Ascending aorta (tissue), 2 donors: ENCODE measurements at regions of chr9 and their contacts with region 1.

Region 1: GRCh38 chr9:35814841-35815543 is at the start of gene HINT2:
- DNase-seq: peak; percentile 97 to 99
- H3K4me3 ChIP-seq: peak within 1 kb of the TSS; percentile 89 to 90
- H3K27ac ChIP-seq: peak within 1 kb of the TSS; percentile 92 to 96
- H3K4me1 ChIP-seq: peaks cover 8 to 27% of the 10 kb centered on the region in 2 donors
- H3K27me3 ChIP-seq: no peaks in the 10 kb centered on the region
- CTCF ChIP-seq: no peak
- total RNA-seq, gene HINT2: 21.6 TPM

Region 2: GRCh38 chr9:35732122-35732799 is 82.7 kb before region 1 on chr9 and contains the starts of genes CREB3 and TLN1:
- intact Hi-C with region 1: loop called (anchors 1 kb)
- DNase-seq: peak; percentile 98 to 100
- H3K4me3 ChIP-seq: peak within 1 kb of the TSS; percentile 74 to 81
- H3K27ac ChIP-seq: peak within 1 kb of the TSS; percentile 98 to 99
- H3K4me1 ChIP-seq: peaks cover 18 to 28% of the 10 kb centered on the region in 2 donors
- H3K27me3 ChIP-seq: no peaks in the 10 kb centered on the region
- CTCF ChIP-seq: no peak
- total RNA-seq, gene CREB3: 48.3 TPM
- total RNA-seq, gene TLN1: 735 TPM

Region 3: DNA sequence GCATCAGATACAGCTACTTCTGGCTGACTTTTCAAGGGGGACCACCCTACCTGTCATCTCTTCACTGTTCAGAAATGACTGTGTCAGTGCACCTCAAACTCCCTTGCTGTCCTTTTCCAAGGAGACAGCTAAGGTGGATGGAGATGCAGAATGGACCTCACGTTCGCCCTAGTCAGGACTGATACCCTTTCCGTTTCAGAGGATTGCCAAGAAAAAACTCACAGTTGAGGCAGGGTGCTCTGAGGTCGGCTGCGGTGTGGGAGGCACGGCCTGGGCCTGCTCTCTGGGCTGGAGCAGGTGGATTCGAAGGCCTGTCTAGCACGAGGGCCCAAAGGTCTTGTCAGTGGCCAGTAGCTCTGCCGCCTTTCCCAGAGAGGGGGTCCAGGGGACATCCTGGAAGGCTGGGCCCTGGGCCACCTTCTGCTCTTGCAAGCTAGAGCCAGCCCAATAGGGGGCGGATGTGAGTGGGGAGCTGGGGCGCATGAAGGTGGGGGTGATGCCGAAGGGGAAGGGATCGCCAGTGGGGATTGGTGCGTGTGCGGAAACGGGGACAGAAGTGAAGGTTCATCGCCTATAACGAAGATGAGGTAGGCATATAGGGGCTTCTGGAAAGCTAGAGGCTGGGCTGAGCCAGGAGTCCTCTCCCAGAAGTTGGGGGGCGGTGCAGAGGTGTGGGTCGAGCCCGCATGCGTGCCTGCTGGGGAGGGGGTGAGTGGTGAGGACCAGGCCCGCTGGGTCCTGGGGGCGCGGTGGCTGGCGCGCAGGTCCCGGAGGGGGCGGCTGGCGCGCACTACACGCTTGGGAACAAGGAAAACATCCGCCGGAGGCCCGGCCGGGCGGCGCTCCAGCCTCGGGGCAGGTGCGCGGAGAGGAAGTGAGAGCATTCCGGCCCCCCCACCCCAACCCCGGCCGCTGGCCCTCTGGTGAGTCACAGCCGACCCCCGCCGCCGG is 58.4 kb before region 1 on chr9:
- intact Hi-C with region 1: loop called (anchors 2 kb)
- DNase-seq: peak; percentile 47 to 86
- H3K4me3 ChIP-seq: peak overlapping the region; percentile 63 to 71
- H3K27ac ChIP-seq: peak overlapping the region; percentile 98
- H3K4me1 ChIP-seq: peaks cover 5 to 31% of the 10 kb centered on the region in 2 donors
- H3K27me3 ChIP-seq: no peaks in the 10 kb centered on the region
- CTCF ChIP-seq: peak; percentile 38 to 74 (median 70)

Region 4: DNA sequence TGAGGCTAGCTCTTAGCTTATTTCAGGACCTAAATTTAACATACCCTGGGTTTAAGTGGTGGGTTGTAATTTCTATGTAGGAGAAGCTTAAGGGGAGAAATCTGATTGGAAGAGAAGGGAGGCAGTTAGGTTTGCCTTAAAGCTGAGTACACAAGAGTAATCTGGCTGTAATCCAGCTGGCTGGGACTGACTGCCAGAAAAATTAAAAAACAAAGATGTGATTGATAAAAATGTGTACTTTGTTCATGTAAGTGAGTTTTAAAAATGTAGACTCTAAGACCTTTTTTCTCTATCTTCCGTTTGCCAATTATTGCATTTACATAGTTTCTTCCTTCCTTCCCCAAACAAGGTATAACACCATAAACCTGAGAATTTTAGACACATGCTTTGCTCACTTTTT is 43.5 kb before region 1 on chr9:
- intact Hi-C with region 1: no loop called
- DNase-seq: no peak
- H3K4me3 ChIP-seq: no peak overlapping the region
- H3K27ac ChIP-seq: peak overlapping the region; percentile 39 to 56
- H3K4me1 ChIP-seq: peaks cover 6 to 13% of the 10 kb centered on the region in 2 donors
- H3K27me3 ChIP-seq: no peaks in the 10 kb centered on the region
- CTCF ChIP-seq: no peak

Region 5: GRCh38 chr9:35829084-35829763 is 14.2 kb after region 1 on chr9 and contains the start of gene TMEM8B:
- intact Hi-C with region 1: loop called (anchors 1 kb)
- DNase-seq: peak; percentile 90 to 98
- H3K4me3 ChIP-seq: peak within 1 kb of the TSS; percentile 75 to 96
- H3K27ac ChIP-seq: peak within 1 kb of the TSS; percentile 88 to 98
- H3K4me1 ChIP-seq: peaks cover 10 to 31% of the 10 kb centered on the region in 2 donors
- H3K27me3 ChIP-seq: no peaks in the 10 kb centered on the region
- CTCF ChIP-seq: no peak
- total RNA-seq, gene TMEM8B: 37.3 TPM

Region 6: GRCh38 chr9:36036780-36037548 is 222.0 kb after region 1 on chr9 and contains the start of gene RECK:
- intact Hi-C with region 1: loop called (anchors 10 kb)
- DNase-seq: peak; percentile 77 to 97
- H3K4me3 ChIP-seq: peak within 1 kb of the TSS; percentile 86 to 95
- H3K27ac ChIP-seq: peak within 1 kb of the TSS; percentile 86 to 88
- H3K4me1 ChIP-seq: peaks cover 0 to 9% of the 10 kb centered on the region in 2 donors
- H3K27me3 ChIP-seq: no peaks in the 10 kb centered on the region
- CTCF ChIP-seq: no peak
- total RNA-seq, gene RECK: 5.7 TPM